HEK293 (cell line): ENCODE measurements at regions of chr17 and their contacts with region 1.

Region 1: GRCh38 chr17:40854159-40854814 is 12.7 kb downstream of the KRT12 start:
- H3K4me3 ChIP-seq: no peak overlapping the region
- H3K27ac ChIP-seq: no peak overlapping the region
- H3K4me1 ChIP-seq: peaks cover 5% of the 10 kb centered on the region
- CTCF ChIP-seq: no peak

Region 2: DNA sequence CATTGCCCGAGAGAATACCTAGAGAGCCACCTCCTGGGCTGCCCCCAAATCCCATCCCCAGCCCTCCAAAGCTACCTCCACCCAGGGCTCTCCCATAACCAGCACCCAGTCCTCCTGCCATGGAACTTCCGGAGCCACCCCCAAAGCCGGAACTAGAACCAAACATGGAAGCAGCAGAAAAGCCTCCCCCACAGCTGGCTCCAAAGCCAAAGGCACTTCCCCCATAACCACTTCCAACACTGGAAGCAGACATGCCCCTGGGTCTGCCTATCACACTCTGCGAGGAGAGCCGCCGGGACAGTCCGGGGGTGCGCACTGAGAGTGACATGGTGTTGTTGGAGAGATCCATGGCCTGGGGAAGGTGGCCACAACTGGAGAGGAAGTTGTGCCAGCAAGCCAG is 12.6 kb after region 1 on chr17 and contains the start of gene KRT12:
- CTCF ChIA-PET with region 1: interaction called, 21 read pairs
- POLR2A ChIA-PET with region 1: no interaction called
- H3K4me3 ChIP-seq: no peak within 1 kb of the TSS
- H3K27ac ChIP-seq: no peak within 1 kb of the TSS
- H3K4me1 ChIP-seq: no peaks in the 10 kb centered on the region
- CTCF ChIP-seq: no peak